ENCODE measurements at regions of chr3 and their contacts with region 1.

Region 1: GRCh38 chr3:71069797-71070196 is 513.7 kb downstream of the FOXP1 start:
- DNase-seq: peak; percentile 73 to 87 (median 76)
- ATAC-seq: peak; percentile 78 to 88
- H3K4me3 ChIP-seq: no peak overlapping the region
- H3K27ac ChIP-seq: no peak overlapping the region
- H3K4me1 ChIP-seq: peaks cover 9% of the 10 kb centered on the region
- H3K27me3 ChIP-seq: no peaks in the 10 kb centered on the region

Region 2: DNA sequence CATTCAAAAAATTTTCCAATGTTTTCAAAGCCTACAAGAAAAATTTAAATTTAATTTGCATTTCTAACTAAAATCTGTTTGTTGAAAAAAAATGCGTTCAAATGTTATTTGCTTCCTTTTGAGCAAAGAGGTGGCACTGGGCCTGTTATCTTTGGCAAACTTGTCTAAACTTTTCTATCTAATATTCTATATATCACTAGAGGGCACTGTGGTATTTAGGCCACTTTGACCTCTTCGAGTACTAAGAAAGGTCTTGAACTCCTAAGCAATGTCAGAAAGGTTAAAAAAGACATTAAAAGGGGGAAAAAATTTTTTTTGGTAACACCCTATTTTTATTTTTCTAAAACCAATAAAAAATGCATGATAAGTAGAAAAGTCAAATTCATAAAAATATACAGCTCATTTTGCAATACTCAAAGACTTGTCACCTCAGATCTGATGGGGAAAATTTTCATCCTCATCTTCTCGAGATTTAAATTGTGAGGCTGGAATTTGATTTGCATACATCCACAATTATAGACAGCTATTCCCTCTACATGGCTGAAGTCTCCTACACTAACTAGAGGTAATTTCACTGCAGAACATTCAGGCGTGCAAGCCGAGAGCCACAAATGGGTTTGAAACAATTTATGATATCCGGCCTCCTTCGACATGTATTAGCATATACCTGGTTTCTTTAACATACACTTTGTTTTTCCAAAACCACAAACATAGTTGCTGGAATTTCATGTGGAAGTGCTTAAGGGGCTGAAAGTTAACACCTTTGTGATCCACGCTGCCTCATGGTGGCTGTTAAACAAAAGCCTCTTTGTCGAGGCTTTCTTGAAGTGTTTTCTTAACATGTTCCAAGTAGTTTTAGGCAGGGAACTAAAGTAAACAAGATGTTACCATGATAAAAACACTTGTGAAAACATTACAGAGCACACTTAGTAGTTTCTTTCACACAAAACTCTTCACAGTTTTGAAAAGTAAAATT is 62.7 kb before region 1 on chr3:
- intact Hi-C with region 1: loop called in 1 of 4 experiments (anchors 5 kb)
- DNase-seq: peak in 1 of 3 donors; percentile 12
- ATAC-seq: peak; percentile 61 to 64
- H3K4me3 ChIP-seq: no peak overlapping the region
- H3K27ac ChIP-seq: no peak overlapping the region
- H3K4me1 ChIP-seq: no peaks in the 10 kb centered on the region
- H3K27me3 ChIP-seq: no peaks in the 10 kb centered on the region

Measured in right cardiac atrium (tissue), 5 donors.